ENCODE measurements at regions of chr2 and their contacts with region 1.

Region 1: DNA sequence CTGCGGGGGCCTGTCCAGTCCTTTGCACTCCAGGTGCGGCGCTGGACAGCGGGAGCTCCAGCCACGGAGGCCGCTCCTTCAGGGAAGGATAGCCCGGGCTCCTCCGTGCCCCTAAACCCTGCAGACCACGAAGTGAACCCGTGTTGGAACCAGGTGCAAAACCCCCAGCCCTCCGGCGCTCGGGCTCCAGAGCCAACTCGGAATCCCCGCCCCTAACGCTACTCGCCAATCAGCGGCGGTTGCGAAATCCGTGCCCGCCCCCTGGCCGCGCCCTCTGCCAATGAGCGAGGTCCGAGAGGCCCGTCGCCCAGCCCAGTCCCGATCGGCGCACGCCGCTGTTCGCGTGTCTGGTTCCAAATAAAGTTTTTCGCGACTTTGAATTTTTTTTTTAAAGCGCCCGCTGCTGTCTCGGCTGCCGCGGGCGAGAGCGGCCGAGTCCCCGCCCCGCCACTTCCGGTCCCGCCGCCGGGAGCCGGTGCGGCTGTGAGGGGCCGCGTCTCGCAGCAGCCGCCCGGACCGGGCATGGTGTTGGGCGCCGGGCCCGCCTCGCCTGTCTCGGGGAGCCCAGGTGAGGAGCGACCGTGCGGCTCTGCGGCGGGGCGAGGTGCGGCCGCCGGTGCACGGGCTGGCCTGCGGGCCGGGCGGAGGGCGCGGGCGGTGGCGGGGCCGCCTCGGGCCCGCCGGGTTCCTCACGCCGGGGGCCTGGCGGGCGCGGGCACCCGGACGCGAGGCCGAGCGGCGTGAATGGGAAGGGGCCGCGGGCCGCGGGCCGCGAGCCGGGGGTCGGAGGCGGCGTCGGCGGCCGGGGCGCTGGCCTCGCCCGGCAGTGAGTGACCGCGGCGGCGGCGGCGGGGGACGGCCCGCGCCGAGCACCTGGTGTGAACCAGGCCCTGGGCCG is at the start of gene UBE2F:
- DNase-seq: peak; percentile 95 to 98 (median 97)
- ATAC-seq: peak; percentile 96
- H3K4me3 ChIP-seq: peak within 1 kb of the TSS; percentile 61 to 86
- H3K4me3 Mint-ChIP-seq: peak within 1 kb of the TSS; percentile 85
- H3K27ac ChIP-seq: peak within 1 kb of the TSS; percentile 39 to 67
- H3K27ac Mint-ChIP-seq: peak within 1 kb of the TSS; percentile 84
- H3K4me1 ChIP-seq: peaks cover 38% of the 10 kb centered on the region
- H3K4me1 Mint-ChIP-seq: peaks cover 40% of the 10 kb centered on the region
- H3K27me3 ChIP-seq: no peaks in the 10 kb centered on the region
- H3K27me3 Mint-ChIP-seq: no peaks in the 10 kb centered on the region
- CTCF ChIP-seq: no peak
- total RNA-seq, gene UBE2F: 16.5 to 18.4 TPM

Region 2: GRCh38 chr2:237391140-237391723 is 575.6 kb before region 1 on chr2:
- CTCF ChIA-PET with region 1: no interaction called
- POLR2A ChIA-PET with region 1: no interaction called
- intact Hi-C with region 1: no loop called
- DNase-seq: no peak
- ATAC-seq: no peak
- H3K4me3 ChIP-seq: no peak overlapping the region
- H3K4me3 Mint-ChIP-seq: no peak overlapping the region
- H3K27ac ChIP-seq: no peak overlapping the region
- H3K27ac Mint-ChIP-seq: no peak overlapping the region
- H3K4me1 ChIP-seq: no peaks in the 10 kb centered on the region
- H3K4me1 Mint-ChIP-seq: no peaks in the 10 kb centered on the region
- H3K27me3 ChIP-seq: no peaks in the 10 kb centered on the region
- H3K27me3 Mint-ChIP-seq: no peaks in the 10 kb centered on the region
- CTCF ChIP-seq: no peak

Region 3: GRCh38 chr2:237700512-237701032 is 266.2 kb before region 1 on chr2:
- CTCF ChIA-PET with region 1: no interaction called
- POLR2A ChIA-PET with region 1: no interaction called
- intact Hi-C with region 1: loop called in 1 of 2 experiments (anchors 10 kb)
- DNase-seq: peak in 6 of 9 experiments; percentile 40 to 93 (median 80)
- ATAC-seq: peak; percentile 76
- H3K4me3 ChIP-seq: no peak overlapping the region
- H3K4me3 Mint-ChIP-seq: peak overlapping the region; percentile 80
- H3K27ac ChIP-seq: peak overlapping the region; percentile 42 to 70
- H3K27ac Mint-ChIP-seq: peak overlapping the region; percentile 94
- H3K4me1 ChIP-seq: peaks cover 99% of the 10 kb centered on the region
- H3K4me1 Mint-ChIP-seq: peaks cover 95% of the 10 kb centered on the region
- H3K27me3 ChIP-seq: no peaks in the 10 kb centered on the region
- H3K27me3 Mint-ChIP-seq: no peaks in the 10 kb centered on the region
- CTCF ChIP-seq: no peak

Region 4: GRCh38 chr2:237819231-237819630 is 147.6 kb before region 1 on chr2:
- CTCF ChIA-PET with region 1: no interaction called
- POLR2A ChIA-PET with region 1: no interaction called
- intact Hi-C with region 1: no loop called
- DNase-seq: no peak
- ATAC-seq: no peak
- H3K4me3 ChIP-seq: no peak overlapping the region
- H3K4me3 Mint-ChIP-seq: no peak overlapping the region
- H3K27ac ChIP-seq: no peak overlapping the region
- H3K27ac Mint-ChIP-seq: no peak overlapping the region
- H3K4me1 ChIP-seq: no peaks in the 10 kb centered on the region
- H3K4me1 Mint-ChIP-seq: no peaks in the 10 kb centered on the region
- H3K27me3 ChIP-seq: no peaks in the 10 kb centered on the region
- H3K27me3 Mint-ChIP-seq: no peaks in the 10 kb centered on the region
- CTCF ChIP-seq: no peak

Region 5: DNA sequence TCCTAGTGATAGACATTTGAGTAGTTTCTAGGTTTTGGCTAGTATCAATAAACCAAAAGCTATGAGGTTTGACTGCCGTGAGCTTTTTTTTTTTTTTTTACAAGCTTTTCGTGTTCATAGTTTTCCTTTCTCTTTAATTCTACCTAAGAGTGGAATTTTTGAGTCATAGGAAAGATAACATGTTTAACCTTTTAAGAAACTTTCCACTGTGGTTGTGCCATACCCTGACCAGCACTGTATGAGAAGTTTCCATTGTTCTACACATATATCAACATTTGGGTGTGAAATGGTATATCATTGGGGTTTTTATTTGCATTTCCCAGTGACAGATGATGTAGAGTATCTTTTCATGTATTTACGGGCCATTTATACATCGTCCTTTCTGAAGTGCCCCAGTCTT is 31.7 kb after region 1 on chr2:
- CTCF ChIA-PET with region 1: interaction called, 3 read pairs
- POLR2A ChIA-PET with region 1: no interaction called
- intact Hi-C with region 1: loop called (anchors 2 to 5 kb)
- DNase-seq: peak in 2 of 9 experiments; percentile 52 to 74
- ATAC-seq: peak; percentile 72
- H3K4me3 ChIP-seq: peak overlapping the region; percentile 12 to 34
- H3K4me3 Mint-ChIP-seq: peak overlapping the region; percentile 71
- H3K27ac ChIP-seq: peak overlapping the region; percentile 21 to 75
- H3K27ac Mint-ChIP-seq: peak overlapping the region; percentile 86
- H3K4me1 ChIP-seq: peaks cover 19% of the 10 kb centered on the region
- H3K4me1 Mint-ChIP-seq: peaks cover 38% of the 10 kb centered on the region
- H3K27me3 ChIP-seq: no peaks in the 10 kb centered on the region
- H3K27me3 Mint-ChIP-seq: no peaks in the 10 kb centered on the region
- CTCF ChIP-seq: no peak

Region 6: GRCh38 chr2:238203094-238203972 is 236.5 kb after region 1 on chr2 and contains the start of gene ILKAP:
- CTCF ChIA-PET with region 1: no interaction called
- POLR2A ChIA-PET with region 1: no interaction called
- intact Hi-C with region 1: loop called (anchors 1 to 2 kb)
- DNase-seq: peak; percentile 78 to 94 (median 90)
- ATAC-seq: peak; percentile 97
- H3K4me3 ChIP-seq: peak within 1 kb of the TSS; percentile 65 to 71
- H3K4me3 Mint-ChIP-seq: peak within 1 kb of the TSS; percentile 89
- H3K27ac ChIP-seq: peak within 1 kb of the TSS; percentile 71 to 84
- H3K27ac Mint-ChIP-seq: peak within 1 kb of the TSS; percentile 92
- H3K4me1 ChIP-seq: peaks cover 43% of the 10 kb centered on the region
- H3K4me1 Mint-ChIP-seq: peaks cover 46% of the 10 kb centered on the region
- H3K27me3 ChIP-seq: no peaks in the 10 kb centered on the region
- H3K27me3 Mint-ChIP-seq: peaks cover 2% of the 10 kb centered on the region
- CTCF ChIP-seq: no peak
- total RNA-seq, gene ILKAP: 133 to 144 TPM

Region 7: DNA sequence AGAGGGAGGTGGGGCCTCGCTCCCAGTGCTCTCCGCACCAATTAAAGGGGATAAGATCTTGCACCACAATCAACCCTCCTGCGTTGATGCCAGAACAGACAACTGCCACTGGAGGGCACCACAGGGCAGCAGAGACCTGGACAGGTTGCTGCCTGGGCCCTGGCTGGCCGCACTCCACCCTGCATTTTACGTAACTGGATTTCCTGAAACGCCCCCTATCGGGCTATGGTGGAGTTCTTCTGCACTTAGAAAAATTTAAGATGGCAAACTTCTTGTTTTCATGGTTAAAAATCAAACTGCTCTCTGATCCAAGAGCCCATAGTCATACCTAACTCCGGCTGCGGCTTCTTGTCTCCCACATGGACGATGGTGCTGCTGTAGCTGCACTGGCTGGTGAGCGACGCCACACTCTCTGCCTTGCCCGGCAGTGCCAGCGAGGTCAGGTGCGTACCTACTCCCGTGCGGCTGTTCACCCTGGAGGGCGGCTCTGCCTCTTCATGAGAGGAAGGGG is 289.8 kb after region 1 on chr2:
- CTCF ChIA-PET with region 1: interaction called, 3 read pairs
- POLR2A ChIA-PET with region 1: no interaction called
- intact Hi-C with region 1: loop called in 1 of 2 experiments (anchors 1 kb)
- DNase-seq: peak; percentile 37 to 85 (median 72)
- ATAC-seq: peak; percentile 95
- H3K4me3 ChIP-seq: no peak overlapping the region
- H3K4me3 Mint-ChIP-seq: no peak overlapping the region
- H3K27ac ChIP-seq: no peak overlapping the region
- H3K27ac Mint-ChIP-seq: no peak overlapping the region
- H3K4me1 ChIP-seq: no peaks in the 10 kb centered on the region
- H3K4me1 Mint-ChIP-seq: no peaks in the 10 kb centered on the region
- H3K27me3 ChIP-seq: no peaks in the 10 kb centered on the region
- H3K27me3 Mint-ChIP-seq: no peaks in the 10 kb centered on the region
- CTCF ChIP-seq: peak; percentile 80

Region 8: GRCh38 chr2:238288650-238289573 is 322.1 kb after region 1 on chr2:
- CTCF ChIA-PET with region 1: no interaction called
- POLR2A ChIA-PET with region 1: no interaction called
- intact Hi-C with region 1: loop called (anchors 1 to 10 kb)
- DNase-seq: peak; percentile 94 to 99 (median 97)
- ATAC-seq: peak; percentile 85
- H3K4me3 ChIP-seq: peak overlapping the region; percentile 53 to 66
- H3K4me3 Mint-ChIP-seq: peak overlapping the region; percentile 91
- H3K27ac ChIP-seq: peak overlapping the region; percentile 78 to 91
- H3K27ac Mint-ChIP-seq: peak overlapping the region; percentile 96
- H3K4me1 ChIP-seq: peaks cover 25% of the 10 kb centered on the region
- H3K4me1 Mint-ChIP-seq: peaks cover 38% of the 10 kb centered on the region
- H3K27me3 ChIP-seq: no peaks in the 10 kb centered on the region
- H3K27me3 Mint-ChIP-seq: no peaks in the 10 kb centered on the region
- CTCF ChIP-seq: no peak

Region 9: DNA sequence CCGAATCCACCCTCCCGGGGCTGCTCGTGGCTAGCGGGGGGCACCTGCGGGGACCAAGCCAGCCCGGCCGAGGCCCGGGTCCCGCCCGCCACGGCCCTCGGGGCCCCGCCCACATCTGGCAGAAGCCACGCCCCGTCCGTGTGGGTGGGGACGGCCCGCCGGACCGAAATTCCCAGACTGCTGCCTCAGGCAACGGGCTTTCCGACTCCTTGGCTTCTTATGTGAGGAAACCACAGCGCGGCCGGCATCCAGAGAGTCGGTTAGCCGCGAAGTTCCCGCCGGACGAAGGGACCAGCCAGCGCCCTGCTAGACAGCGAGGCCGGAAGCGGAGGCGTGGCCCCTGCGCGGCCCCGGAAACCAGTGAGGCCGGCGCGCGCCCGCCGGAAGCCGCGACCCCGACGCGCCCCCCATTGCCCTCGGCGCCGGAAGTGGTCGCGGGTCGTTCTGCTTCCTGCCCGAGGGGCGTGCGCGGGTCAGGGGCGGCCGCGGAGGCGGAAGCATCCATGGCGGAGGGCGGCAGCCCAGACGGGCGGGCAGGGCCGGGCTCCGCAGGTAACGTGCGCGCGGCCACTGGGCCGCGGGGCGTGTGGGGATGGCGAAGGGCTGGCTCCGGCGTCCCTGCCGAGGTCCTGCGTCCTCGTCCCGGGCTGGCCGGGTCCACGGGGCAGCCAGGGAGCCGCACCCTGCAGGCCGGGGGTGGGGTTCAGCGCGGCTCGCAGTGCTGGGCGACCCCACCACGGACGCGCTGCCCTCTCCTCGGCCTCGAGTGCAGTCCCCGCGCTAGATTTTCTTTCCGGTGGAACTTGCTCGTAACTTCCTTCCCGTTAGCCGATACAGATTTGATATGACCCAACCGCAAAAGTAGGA is 460.0 kb after region 1 on chr2 and contains the start of gene ASB1:
- CTCF ChIA-PET with region 1: no interaction called
- POLR2A ChIA-PET with region 1: no interaction called
- intact Hi-C with region 1: loop called in 1 of 2 experiments (anchors 10 kb)
- DNase-seq: peak; percentile 62 to 94 (median 83)
- ATAC-seq: peak; percentile 78
- H3K4me3 ChIP-seq: peak within 1 kb of the TSS; percentile 66 to 79
- H3K4me3 Mint-ChIP-seq: peak within 1 kb of the TSS; percentile 92
- H3K27ac ChIP-seq: peak within 1 kb of the TSS; percentile 78 to 87
- H3K27ac Mint-ChIP-seq: peak within 1 kb of the TSS; percentile 97
- H3K4me1 ChIP-seq: peaks cover 37% of the 10 kb centered on the region
- H3K4me1 Mint-ChIP-seq: peaks cover 49% of the 10 kb centered on the region
- H3K27me3 ChIP-seq: no peaks in the 10 kb centered on the region
- H3K27me3 Mint-ChIP-seq: no peaks in the 10 kb centered on the region
- CTCF ChIP-seq: no peak
- total RNA-seq, gene ASB1: 16.3 to 25.3 TPM